Prostate gland (tissue), 2 donors: ENCODE measurements at regions of chr20 and their contacts with region 1.

Region 1: DNA sequence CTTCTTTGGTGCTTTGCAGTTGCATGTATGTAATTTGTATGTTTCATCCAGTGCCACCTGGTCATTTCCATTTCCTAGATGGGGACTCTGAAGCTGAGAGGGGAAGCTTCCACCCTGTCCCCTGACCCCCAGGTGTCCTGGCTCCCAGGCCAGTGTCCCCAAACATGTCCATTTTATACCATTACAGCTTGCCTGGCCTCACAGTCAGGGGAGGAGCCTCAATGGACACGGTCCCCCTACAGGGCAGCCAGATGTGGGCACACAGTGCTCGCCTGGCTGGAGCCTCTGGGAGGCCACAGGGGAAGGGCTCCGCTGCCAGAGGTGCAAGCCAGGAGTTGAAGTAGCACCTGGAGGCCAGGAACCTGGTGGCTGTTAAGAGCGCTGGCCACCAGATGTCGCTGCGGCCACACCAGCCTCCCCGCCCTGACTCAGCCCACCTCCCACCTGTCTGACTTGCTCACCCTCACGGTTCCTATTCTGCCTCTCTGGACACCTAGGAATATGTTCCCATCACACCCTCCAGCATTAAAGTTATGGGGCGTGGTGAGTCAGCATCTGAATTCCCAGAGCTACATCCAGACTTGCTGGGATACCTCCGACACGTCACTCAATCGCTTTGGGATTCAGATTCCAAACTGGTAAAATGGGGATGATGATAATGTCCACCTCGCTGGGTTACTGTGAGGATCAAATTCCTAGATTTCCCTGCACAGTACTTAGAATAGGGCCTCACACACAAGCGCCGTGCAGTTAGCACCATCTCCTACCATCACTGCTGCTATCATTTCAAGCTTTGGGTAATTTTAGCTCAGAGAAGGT is 107.4 kb downstream of the SULF2 start:
- DNase-seq: peak; percentile 46
- H3K4me3 ChIP-seq: no peak overlapping the region
- H3K27ac ChIP-seq: no peak overlapping the region
- H3K4me1 ChIP-seq: no peaks in the 10 kb centered on the region
- H3K27me3 ChIP-seq: no peaks in the 10 kb centered on the region
- CTCF ChIP-seq: peak; percentile 57 to 86 (median 82)
- POLR2A ChIP-seq: no peak

Region 2: GRCh38 chr20:47785854-47786764 is 108.3 kb after region 1 on chr20:
- intact Hi-C with region 1: loop called (anchors 2 kb)
- DNase-seq: peak; percentile 68
- H3K4me3 ChIP-seq: peak overlapping the region; percentile 40 to 44
- H3K27ac ChIP-seq: peak overlapping the region; percentile 66
- H3K4me1 ChIP-seq: peaks cover 9% of the 10 kb centered on the region
- H3K27me3 ChIP-seq: no peaks in the 10 kb centered on the region
- CTCF ChIP-seq: peak; percentile 39 to 79 (median 60)
- POLR2A ChIP-seq: no peak

Region 3: DNA sequence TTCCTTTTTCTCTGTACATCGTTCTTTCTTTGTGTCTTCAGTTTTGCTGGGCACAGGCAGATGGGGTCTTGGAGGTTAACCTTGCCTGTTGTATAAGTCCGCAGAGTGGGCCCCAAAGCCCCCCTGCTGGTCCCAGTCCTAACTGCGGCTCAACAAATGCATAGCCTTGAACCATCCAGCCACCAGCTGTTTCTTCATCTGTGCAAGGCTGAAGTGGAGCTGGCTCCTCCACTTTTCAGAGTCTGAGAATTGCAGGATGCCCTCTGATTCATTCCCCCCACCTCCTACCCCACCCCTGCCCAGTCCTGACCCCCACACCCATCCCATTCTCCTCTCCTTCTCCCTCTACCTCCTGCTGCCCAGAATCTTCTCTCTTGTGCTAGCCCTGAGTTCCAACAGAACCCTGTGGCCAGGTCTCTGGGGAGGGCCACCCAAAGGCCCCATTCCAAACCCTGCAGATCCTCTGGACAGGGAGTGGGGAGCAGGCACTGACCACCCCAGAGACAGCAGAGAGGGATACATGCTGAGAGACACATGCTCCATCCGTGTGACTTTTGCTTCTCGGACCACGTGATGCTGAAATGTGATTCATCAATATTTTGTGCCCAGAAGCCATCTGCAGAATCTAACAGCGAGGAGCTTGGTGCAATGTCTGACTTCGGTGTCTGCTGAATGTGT is 494.0 kb after region 1 on chr20:
- intact Hi-C with region 1: loop called (anchors 10 kb)
- DNase-seq: no peak
- H3K4me3 ChIP-seq: no peak overlapping the region
- H3K27ac ChIP-seq: no peak overlapping the region
- H3K4me1 ChIP-seq: no peaks in the 10 kb centered on the region
- H3K27me3 ChIP-seq: peaks cover 10% of the 10 kb centered on the region
- CTCF ChIP-seq: no peak
- POLR2A ChIP-seq: no peak

Region 4: GRCh38 chr20:48374991-48375595 is 697.2 kb after region 1 on chr20:
- intact Hi-C with region 1: loop called (anchors 10 kb)
- DNase-seq: no peak
- H3K4me3 ChIP-seq: no peak overlapping the region
- H3K27ac ChIP-seq: no peak overlapping the region
- H3K4me1 ChIP-seq: no peaks in the 10 kb centered on the region
- H3K27me3 ChIP-seq: no peaks in the 10 kb centered on the region
- CTCF ChIP-seq: no peak
- POLR2A ChIP-seq: no peak